CD4-positive, alpha-beta memory T cell (primary cell): ENCODE measurements at regions of chr10 and their contacts with region 1.

Region 1: DNA sequence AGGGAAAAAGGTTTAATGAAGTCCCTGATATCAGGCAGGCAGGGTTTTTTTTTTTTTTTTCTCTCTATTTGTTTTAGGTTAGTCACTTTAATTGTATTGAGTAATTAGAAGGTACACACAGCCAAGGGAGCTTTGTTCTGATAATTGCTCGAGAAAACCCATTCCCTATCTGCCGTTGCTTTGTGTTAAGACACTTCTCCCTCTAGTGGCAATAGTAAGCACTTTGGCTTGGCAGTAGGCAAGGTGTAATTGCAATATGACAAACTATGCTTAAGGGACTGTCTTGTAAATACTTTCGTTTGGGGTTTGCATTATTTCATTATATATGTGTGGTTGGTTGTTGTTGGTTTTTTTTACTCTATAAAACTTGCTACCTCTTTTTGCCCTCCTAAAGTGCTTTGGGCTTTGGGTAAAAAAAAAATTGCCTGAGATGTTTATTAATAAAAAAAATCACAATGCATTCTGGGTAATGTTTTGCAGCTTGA is 113.4 kb downstream of the BTRC start:
- DNase-seq: peak; percentile 41 to 66 (median 56)
- H3K4me3 ChIP-seq: no peak overlapping the region
- H3K4me3 Mint-ChIP-seq: no peak overlapping the region
- H3K27ac ChIP-seq: no peak overlapping the region
- H3K27ac Mint-ChIP-seq: no peak overlapping the region
- H3K4me1 ChIP-seq: no peaks in the 10 kb centered on the region
- H3K4me1 Mint-ChIP-seq: peaks cover 0 to 9% (median 6%) of the 10 kb centered on the region in 4 donors
- H3K27me3 ChIP-seq: no peaks in the 10 kb centered on the region
- H3K27me3 Mint-ChIP-seq: no peaks in the 10 kb centered on the region

Region 2: DNA sequence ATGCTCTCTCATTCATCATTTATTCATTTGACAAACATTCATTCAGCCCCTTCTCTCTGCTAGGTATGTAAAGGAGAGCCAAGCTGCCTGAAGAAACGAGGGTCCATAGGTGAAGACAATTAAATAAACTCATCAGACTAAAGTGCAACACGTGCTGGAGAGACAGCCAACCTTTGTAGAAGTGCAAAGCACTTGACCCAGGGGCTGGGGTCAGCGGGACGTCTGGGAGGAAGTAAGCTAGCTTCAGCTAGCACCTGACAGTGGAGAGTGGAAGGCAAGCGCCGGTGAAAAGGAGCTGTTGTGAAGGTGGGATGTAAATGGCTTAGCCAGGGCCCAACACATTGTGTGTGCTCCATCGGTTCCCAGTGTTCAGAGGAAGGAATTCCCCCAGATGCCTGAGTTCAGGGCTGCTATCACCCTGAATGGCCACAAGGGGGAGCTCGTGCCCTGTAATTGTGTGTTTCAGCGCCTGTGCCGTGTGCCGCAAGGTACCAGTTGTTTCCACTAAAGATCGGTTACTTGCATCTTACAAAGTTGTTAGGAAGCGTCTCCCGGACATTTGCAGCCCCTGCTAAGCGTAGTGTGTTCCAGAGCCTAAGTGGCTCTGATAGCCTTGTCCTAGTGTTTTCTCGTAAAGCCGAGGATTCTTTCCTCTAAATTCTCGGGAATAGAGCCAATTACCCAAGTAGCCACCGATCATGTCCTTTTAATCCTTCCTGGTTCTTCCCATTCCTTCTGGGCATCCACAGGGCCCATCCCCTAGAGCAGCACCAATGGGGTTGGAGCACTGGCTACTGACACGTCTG is 305.6 kb before region 1 on chr10:
- CTCF ChIA-PET with region 1: no interaction called
- POLR2A ChIA-PET with region 1: no interaction called
- intact Hi-C with region 1: loop called (anchors 5 kb)
- DNase-seq: peak; percentile 62 to 71 (median 69)
- H3K4me3 ChIP-seq: no peak overlapping the region
- H3K4me3 Mint-ChIP-seq: peak overlapping the region in 3 of 8 donors; percentile 41 to 69 (median 62)
- H3K27ac ChIP-seq: no peak overlapping the region
- H3K27ac Mint-ChIP-seq: peak overlapping the region in 2 of 7 donors; percentile 14 to 20
- H3K4me1 ChIP-seq: peaks cover 8% of the 10 kb centered on the region
- H3K4me1 Mint-ChIP-seq: peaks cover 6 to 14% (median 11%) of the 10 kb centered on the region in 4 donors
- H3K27me3 ChIP-seq: peaks cover 7% of the 10 kb centered on the region
- H3K27me3 Mint-ChIP-seq: peaks cover 38 to 51% of the 10 kb centered on the region in 2 donors

Region 3: GRCh38 chr10:101301249-101301711 is 166.0 kb before region 1 on chr10:
- CTCF ChIA-PET with region 1: interaction called, 18 read pairs
- POLR2A ChIA-PET with region 1: no interaction called
- intact Hi-C with region 1: loop called (anchors 5 kb)
- DNase-seq: no peak
- H3K4me3 ChIP-seq: no peak overlapping the region
- H3K4me3 Mint-ChIP-seq: no peak overlapping the region
- H3K27ac ChIP-seq: no peak overlapping the region
- H3K27ac Mint-ChIP-seq: no peak overlapping the region
- H3K4me1 ChIP-seq: no peaks in the 10 kb centered on the region
- H3K4me1 Mint-ChIP-seq: peaks cover 0 to 4% (median 1%) of the 10 kb centered on the region in 4 donors
- H3K27me3 ChIP-seq: peaks cover 4% of the 10 kb centered on the region
- H3K27me3 Mint-ChIP-seq: peaks cover 15 to 33% of the 10 kb centered on the region in 2 donors

Region 4: GRCh38 chr10:101397140-101397539 is 70.2 kb before region 1 on chr10:
- CTCF ChIA-PET with region 1: no interaction called
- POLR2A ChIA-PET with region 1: no interaction called
- intact Hi-C with region 1: loop called (anchors 10 kb)
- DNase-seq: peak; percentile 66 to 81 (median 78)
- H3K4me3 ChIP-seq: no peak overlapping the region
- H3K4me3 Mint-ChIP-seq: peak overlapping the region in 2 of 8 donors; percentile 26 to 31
- H3K27ac ChIP-seq: no peak overlapping the region
- H3K27ac Mint-ChIP-seq: peak overlapping the region in 6 of 7 donors; percentile 53 to 93 (median 72)
- H3K4me1 ChIP-seq: peaks cover 14% of the 10 kb centered on the region
- H3K4me1 Mint-ChIP-seq: peaks cover 14 to 24% (median 20%) of the 10 kb centered on the region in 4 donors
- H3K27me3 ChIP-seq: no peaks in the 10 kb centered on the region
- H3K27me3 Mint-ChIP-seq: no peaks in the 10 kb centered on the region

Region 5: DNA sequence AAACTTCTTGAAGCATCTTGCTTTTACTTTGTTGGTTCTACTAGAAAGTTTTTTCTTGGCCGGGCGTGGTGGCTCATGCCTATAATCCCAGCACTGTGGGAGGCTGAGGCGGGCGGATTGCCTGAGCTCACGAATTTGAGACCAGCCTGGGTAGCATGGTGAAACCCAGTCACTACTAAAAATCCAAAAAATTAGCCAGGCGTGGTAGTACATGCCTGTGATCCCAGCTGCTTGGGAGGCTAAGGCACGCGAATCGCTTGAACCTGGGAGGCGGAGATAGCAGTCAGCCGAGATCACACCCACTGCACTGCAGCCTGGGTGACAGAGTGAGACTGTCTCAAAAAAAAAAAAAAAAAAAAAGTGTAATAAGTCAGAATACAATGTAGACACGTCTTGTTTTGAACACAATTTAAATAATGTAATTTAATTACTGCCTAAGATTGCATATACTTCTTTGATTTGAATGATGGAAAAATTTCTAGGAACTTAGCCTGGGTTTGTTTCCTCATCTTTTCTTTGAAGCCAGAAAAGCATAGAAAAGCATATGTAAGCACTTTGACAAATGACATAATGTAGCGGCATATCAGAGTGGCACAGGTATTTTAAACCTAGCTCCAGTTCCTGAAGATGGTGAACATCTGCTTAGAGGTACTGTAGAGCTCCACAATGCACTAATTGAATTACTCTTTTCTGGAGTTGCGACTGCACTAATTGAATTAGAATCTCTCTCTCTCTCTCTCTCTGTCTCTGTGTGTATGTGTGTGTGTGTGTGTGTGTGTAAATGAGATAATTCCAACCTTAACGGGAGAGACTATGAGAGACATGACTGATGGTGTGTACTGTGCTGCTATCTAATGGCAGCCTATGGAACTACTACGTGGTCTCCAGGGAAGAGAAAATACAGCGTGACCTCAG is 25.5 kb before region 1 on chr10:
- CTCF ChIA-PET with region 1: interaction called, 14 read pairs
- POLR2A ChIA-PET with region 1: no interaction called
- intact Hi-C with region 1: no loop called
- DNase-seq: peak; percentile 18 to 48 (median 31)
- H3K4me3 ChIP-seq: no peak overlapping the region
- H3K4me3 Mint-ChIP-seq: no peak overlapping the region
- H3K27ac ChIP-seq: no peak overlapping the region
- H3K27ac Mint-ChIP-seq: peak overlapping the region in 2 of 7 donors; percentile 5 to 19
- H3K4me1 ChIP-seq: no peaks in the 10 kb centered on the region
- H3K4me1 Mint-ChIP-seq: peaks cover 0 to 5% (median 4%) of the 10 kb centered on the region in 4 donors
- H3K27me3 ChIP-seq: no peaks in the 10 kb centered on the region
- H3K27me3 Mint-ChIP-seq: no peaks in the 10 kb centered on the region

Region 6: GRCh38 chr10:101453791-101454718 is 13.3 kb before region 1 on chr10:
- CTCF ChIA-PET with region 1: interaction called, 53 read pairs
- POLR2A ChIA-PET with region 1: no interaction called
- intact Hi-C with region 1: no loop called
- DNase-seq: peak in 3 of 5 donors; percentile 2 to 16 (median 8)
- H3K4me3 ChIP-seq: no peak overlapping the region
- H3K4me3 Mint-ChIP-seq: peak overlapping the region in 3 of 8 donors; percentile 17 to 52 (median 37)
- H3K27ac ChIP-seq: no peak overlapping the region
- H3K27ac Mint-ChIP-seq: peak overlapping the region in 2 of 7 donors; percentile 1 to 33
- H3K4me1 ChIP-seq: peaks cover 33% of the 10 kb centered on the region
- H3K4me1 Mint-ChIP-seq: peaks cover 24 to 39% (median 32%) of the 10 kb centered on the region in 4 donors
- H3K27me3 ChIP-seq: no peaks in the 10 kb centered on the region
- H3K27me3 Mint-ChIP-seq: no peaks in the 10 kb centered on the region

Region 7: DNA sequence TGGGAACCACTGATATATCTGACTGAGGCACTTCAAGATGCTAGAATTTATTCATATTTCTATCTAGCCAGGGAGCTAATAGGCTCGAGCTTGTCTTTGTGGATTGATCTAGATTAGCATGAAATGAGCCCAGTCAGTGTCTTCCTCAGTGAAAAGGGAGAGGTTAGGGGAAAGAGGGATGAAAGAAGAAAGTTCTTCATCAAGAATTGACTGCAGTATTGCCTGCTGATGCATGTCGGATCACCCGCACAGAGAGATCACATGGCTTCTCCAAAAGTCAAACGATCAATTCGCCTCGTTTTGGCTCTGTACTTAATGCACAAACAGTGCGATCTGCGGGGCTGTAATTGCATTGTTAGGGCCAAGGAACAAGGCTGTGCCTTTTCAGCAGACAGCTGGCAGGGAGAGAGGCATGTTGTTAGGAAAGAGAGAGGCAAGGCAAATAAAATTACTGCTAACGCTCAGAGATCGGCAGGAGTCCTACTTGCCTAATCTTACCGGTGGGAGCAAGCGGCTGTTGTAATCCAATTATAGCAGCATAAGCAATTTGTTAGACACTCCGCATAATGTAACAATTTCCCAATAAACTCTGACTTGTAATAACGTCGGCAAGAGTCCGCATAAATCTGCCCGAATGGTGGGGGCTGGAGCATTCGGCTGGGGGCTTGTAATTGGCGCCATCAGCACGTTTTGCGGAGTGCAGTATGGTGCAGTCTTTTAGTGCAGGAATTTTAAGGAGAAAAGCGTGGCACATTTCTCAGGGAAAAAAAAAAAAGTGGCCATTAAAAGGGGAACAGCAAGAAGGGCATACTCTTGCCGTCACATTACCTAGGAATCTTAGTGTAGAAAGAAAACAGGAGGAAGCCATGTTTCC is 18.6 kb after region 1 on chr10:
- CTCF ChIA-PET with region 1: interaction called, 20 read pairs
- POLR2A ChIA-PET with region 1: interaction called, 4 read pairs
- intact Hi-C with region 1: no loop called
- DNase-seq: no peak
- H3K4me3 ChIP-seq: no peak overlapping the region
- H3K4me3 Mint-ChIP-seq: no peak overlapping the region
- H3K27ac ChIP-seq: no peak overlapping the region
- H3K27ac Mint-ChIP-seq: no peak overlapping the region
- H3K4me1 ChIP-seq: no peaks in the 10 kb centered on the region
- H3K4me1 Mint-ChIP-seq: peaks cover 5 to 15% (median 8%) of the 10 kb centered on the region in 4 donors
- H3K27me3 ChIP-seq: no peaks in the 10 kb centered on the region
- H3K27me3 Mint-ChIP-seq: no peaks in the 10 kb centered on the region